AG04450 (cell line): ENCODE measurements at regions of chr7 and their contacts with region 1.

Region 1: DNA sequence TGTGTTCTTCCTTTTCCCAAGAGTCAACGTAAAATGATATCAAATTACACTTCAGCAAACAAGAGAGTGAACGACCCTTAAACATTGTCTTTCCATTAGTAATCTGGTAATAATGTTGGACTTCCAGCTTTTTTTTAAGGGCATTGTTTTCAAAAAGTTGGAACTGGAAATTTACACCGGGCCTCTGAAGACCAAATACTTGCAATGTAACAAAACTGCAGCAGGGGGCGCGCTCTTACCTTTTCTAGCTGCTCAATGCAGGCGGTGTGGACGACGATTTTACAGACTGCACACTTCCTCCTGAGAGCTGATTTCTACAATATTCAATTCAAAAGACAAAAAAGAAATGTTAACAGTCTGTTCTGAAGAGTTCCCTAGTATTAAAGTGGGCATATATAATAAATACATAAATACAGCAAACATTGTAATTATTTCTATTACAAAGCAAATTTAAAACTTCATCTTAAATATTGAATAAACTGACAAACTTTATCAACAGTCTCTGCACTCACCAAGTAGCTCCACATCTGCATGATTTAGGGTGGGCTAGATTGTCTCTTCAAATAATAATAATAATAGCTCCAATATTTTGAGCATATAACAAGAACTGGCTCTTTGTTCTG is 190.4 kb downstream of the DGKI start:
- DNase-seq: peak; percentile 44
- H3K4me3 ChIP-seq: no peak overlapping the region
- H3K27ac ChIP-seq: no peak overlapping the region
- H3K27me3 ChIP-seq: no peaks in the 10 kb centered on the region
- CTCF ChIP-seq: peak; percentile 92

Region 2: DNA sequence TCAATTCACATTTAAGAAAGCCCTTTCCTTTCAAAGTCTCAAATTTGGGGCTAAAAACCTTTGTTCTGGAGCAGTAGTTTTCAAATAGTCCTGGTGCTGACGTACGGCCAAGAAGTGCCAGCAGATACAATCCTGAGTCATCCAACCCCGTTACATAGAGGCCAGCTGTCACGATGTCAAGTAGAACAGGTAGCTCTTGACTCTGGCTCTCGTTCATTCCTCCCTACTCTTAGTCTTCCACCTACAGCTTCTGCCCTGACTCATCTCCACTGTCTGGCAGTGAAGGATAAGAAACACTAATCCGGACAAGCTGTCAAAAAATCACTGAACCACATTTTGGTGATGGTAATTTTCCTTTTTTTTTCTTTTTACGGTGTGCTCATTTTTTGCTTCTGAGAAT is 180.4 kb before region 1 on chr7:
- CTCF ChIA-PET with region 1: no interaction called
- POLR2A ChIA-PET with region 1: no interaction called
- DNase-seq: no peak
- H3K4me3 ChIP-seq: no peak overlapping the region
- H3K27ac ChIP-seq: no peak overlapping the region
- H3K27me3 ChIP-seq: no peaks in the 10 kb centered on the region
- CTCF ChIP-seq: no peak

Region 3: DNA sequence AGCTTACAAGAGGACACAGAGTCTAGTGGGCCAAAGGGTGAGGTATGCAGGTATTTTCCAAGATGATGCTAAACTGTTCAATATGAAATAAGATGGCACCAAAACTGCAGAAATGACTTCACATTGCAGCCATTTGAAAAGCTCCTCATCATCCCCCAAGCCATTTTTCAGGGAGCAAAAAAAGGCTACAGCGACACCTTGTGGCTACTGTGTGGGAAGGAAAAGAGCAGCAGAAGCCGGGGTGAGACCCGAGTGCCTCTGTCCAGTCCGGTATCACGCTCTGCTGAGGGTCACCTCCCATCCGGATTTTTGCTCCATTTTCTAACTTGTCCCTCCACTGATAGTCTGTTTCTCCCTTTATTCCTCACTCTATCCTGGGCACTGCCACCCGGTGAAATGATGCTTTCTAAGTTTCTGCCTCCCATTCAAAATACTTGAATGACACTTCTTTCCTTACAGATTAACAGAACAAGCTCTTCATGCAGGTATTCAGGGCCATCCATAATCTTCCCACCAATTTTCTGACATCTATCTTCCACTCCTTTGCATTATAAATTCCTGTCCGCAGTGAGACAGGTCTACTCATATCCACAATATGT is 29.8 kb before region 1 on chr7:
- CTCF ChIA-PET with region 1: interaction called, 13 read pairs
- POLR2A ChIA-PET with region 1: no interaction called
- DNase-seq: peak; percentile 6
- H3K4me3 ChIP-seq: no peak overlapping the region
- H3K27ac ChIP-seq: no peak overlapping the region
- H3K27me3 ChIP-seq: no peaks in the 10 kb centered on the region
- CTCF ChIP-seq: peak; percentile 81

Region 4: GRCh38 chr7:137670199-137671071 is 14.1 kb after region 1 on chr7:
- CTCF ChIA-PET with region 1: interaction called, 104 read pairs
- POLR2A ChIA-PET with region 1: interaction called, 7 read pairs
- DNase-seq: no peak
- H3K4me3 ChIP-seq: no peak overlapping the region
- H3K27ac ChIP-seq: no peak overlapping the region
- H3K27me3 ChIP-seq: no peaks in the 10 kb centered on the region
- CTCF ChIP-seq: no peak

Region 5: GRCh38 chr7:137810248-137810647 is 153.9 kb after region 1 on chr7:
- CTCF ChIA-PET with region 1: interaction called, 10 read pairs
- POLR2A ChIA-PET with region 1: no interaction called
- DNase-seq: no peak
- H3K4me3 ChIP-seq: no peak overlapping the region
- H3K27ac ChIP-seq: no peak overlapping the region
- H3K27me3 ChIP-seq: no peaks in the 10 kb centered on the region
- CTCF ChIP-seq: no peak

Region 6: DNA sequence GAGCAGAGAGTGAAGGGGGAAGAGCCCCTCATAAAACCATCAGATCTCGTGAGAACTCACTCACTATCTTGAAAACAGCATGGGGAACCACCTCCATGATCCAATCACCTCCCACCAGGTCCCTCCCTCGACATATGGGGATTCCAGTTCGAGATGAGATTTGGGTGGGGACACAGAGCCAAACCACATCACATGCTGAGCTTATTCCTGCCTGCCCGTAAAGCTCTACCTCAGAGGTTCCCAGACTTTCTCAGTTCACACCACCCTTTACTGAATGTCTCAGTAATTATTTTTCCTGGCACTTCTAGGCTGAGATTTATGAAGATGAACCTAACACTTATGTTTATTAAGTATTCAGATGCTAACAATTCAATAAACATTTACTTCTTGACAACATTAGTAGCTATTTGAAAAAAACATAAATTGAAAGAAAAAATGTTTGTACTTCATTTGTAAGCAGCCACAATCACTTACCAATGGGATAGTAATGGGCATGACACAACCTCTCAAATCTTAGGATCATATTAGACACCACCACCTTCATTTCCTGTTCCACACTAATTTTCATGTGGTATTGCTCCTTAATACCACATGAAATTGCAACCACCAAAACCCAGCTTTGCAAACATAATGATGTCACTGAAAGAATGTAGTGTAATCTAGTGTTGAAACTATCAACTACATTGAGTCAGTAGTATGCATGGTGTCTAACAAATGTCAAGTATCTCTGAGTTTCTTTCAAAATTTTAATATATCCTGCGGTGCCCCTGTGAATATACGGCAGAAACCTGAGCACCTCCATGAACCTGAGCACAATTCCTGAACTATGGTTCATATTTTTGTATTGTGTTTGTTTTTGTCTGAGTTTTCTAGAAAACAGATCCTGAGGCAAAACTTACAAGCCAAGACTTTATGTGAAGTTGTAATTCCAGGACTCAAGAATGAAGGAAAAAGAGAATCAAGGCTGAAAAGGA is 194.9 kb after region 1 on chr7:
- CTCF ChIA-PET with region 1: interaction called, 16 read pairs
- POLR2A ChIA-PET with region 1: no interaction called
- DNase-seq: no peak
- H3K4me3 ChIP-seq: no peak overlapping the region
- H3K27ac ChIP-seq: no peak overlapping the region
- H3K27me3 ChIP-seq: no peaks in the 10 kb centered on the region
- CTCF ChIP-seq: no peak

Region 7: GRCh38 chr7:137898839-137899721 is 242.7 kb after region 1 on chr7:
- CTCF ChIA-PET with region 1: interaction called, 123 read pairs
- POLR2A ChIA-PET with region 1: interaction called, 3 read pairs
- DNase-seq: peak; percentile 47
- H3K4me3 ChIP-seq: no peak overlapping the region
- H3K27ac ChIP-seq: peak overlapping the region; percentile 47
- H3K27me3 ChIP-seq: no peaks in the 10 kb centered on the region
- CTCF ChIP-seq: peak; percentile 98

Region 8: DNA sequence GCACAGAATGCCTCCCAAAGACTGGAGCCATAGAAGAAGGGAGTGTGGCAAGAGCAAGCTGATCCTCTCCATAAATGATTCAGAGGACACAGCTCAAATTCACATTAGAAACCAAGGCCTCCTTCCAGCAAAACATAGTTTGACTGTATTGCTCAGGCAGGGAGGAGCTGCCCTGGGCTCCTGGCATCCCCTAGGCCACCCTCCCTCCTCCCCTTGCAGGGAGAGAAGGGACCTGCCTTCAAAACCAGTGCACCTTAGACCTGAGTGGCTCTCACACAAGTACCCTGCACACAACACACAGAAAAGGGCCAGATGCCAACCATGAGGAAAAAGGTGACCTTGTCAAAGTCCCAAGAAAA is 280.8 kb after region 1 on chr7:
- CTCF ChIA-PET with region 1: no interaction called
- POLR2A ChIA-PET with region 1: no interaction called
- DNase-seq: no peak
- H3K4me3 ChIP-seq: no peak overlapping the region
- H3K27ac ChIP-seq: peak overlapping the region; percentile 63
- H3K27me3 ChIP-seq: no peaks in the 10 kb centered on the region
- CTCF ChIP-seq: no peak

Region 9: DNA sequence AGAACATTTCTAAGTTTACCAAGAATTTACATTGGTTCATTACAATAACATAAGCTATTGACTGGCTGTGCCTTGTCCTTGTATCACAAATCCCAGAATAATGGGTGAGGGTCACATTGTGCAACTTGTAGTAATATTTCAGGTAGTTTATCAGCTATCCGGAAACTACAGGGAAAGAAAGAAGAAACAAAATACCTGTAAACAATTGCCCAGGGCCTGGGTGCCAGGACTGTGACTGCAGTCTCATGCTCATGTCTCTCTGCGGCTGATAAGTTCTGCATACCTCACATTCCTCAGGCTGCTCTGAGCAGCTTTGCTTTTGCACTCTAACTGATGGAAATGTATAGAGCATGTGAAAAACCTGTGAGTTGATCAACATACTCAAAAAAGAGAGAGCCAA is 671.9 kb after region 1 on chr7:
- CTCF ChIA-PET with region 1: no interaction called
- POLR2A ChIA-PET with region 1: no interaction called
- DNase-seq: no peak
- H3K4me3 ChIP-seq: no peak overlapping the region
- H3K27ac ChIP-seq: no peak overlapping the region
- H3K27me3 ChIP-seq: no peaks in the 10 kb centered on the region
- CTCF ChIP-seq: no peak